Activated CD4-positive, alpha-beta T cell treated with anti-CD3 and anti-CD28 coated beads, Interleukin-2, amount 10 ng/mL, durations not matched to agents 7 days and 5 days (primary cell): ENCODE measurements at regions of chr10 and their contacts with region 1.

Region 1: GRCh38 chr10:70146489-70147258 is at the start of gene TYSND1:
- DNase-seq: peak; percentile 96
- H3K4me3 Mint-ChIP-seq: peak within 1 kb of the TSS; percentile 85
- H3K27ac Mint-ChIP-seq: peak within 1 kb of the TSS; percentile 95
- H3K4me1 Mint-ChIP-seq: peaks cover 34% of the 10 kb centered on the region
- H3K27me3 Mint-ChIP-seq: no peaks in the 10 kb centered on the region
- total RNA-seq, gene TYSND1: 11.6 to 14.3 TPM

Region 2: DNA sequence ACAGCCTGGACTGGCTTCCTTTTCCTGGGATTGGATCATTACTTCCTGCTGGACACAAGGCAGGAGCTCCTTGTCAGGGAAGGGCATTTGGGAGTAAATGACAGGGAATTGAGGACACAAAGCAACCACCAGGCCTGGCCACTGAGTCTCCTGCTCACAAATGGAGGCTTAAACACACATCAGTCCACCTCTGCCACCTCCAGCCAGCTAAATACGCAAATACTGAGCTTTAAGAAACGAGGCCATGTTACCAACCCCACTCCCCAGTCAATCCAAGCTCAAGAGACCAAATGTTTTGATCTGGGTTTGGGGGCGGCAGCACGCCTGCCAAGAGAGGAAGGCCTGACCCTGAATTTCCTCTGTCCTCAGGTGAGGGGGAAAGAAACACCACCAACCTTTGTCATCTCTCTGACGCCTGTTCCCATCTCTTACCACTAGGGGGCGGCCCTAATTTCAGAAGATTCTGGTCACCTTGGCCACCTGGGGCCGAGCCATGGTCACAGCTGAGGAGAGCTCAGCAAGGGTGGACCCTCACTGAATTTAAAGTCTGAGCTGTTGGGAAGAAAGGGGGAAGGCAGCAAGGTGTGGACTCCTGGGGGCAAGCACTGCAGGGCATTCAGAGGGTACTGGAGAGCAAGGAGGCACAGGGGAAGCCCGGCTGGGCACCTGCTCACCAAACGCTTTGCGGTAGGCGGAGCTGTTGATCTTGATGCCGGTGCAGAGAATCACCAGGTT is 30.6 kb before region 1 on chr10:
- CTCF ChIA-PET with region 1: interaction called, 21 read pairs
- POLR2A ChIA-PET with region 1: no interaction called
- DNase-seq: peak; percentile 64
- H3K4me3 Mint-ChIP-seq: no peak overlapping the region
- H3K27ac Mint-ChIP-seq: no peak overlapping the region
- H3K4me1 Mint-ChIP-seq: peaks cover 14% of the 10 kb centered on the region
- H3K27me3 Mint-ChIP-seq: no peaks in the 10 kb centered on the region

Region 3: DNA sequence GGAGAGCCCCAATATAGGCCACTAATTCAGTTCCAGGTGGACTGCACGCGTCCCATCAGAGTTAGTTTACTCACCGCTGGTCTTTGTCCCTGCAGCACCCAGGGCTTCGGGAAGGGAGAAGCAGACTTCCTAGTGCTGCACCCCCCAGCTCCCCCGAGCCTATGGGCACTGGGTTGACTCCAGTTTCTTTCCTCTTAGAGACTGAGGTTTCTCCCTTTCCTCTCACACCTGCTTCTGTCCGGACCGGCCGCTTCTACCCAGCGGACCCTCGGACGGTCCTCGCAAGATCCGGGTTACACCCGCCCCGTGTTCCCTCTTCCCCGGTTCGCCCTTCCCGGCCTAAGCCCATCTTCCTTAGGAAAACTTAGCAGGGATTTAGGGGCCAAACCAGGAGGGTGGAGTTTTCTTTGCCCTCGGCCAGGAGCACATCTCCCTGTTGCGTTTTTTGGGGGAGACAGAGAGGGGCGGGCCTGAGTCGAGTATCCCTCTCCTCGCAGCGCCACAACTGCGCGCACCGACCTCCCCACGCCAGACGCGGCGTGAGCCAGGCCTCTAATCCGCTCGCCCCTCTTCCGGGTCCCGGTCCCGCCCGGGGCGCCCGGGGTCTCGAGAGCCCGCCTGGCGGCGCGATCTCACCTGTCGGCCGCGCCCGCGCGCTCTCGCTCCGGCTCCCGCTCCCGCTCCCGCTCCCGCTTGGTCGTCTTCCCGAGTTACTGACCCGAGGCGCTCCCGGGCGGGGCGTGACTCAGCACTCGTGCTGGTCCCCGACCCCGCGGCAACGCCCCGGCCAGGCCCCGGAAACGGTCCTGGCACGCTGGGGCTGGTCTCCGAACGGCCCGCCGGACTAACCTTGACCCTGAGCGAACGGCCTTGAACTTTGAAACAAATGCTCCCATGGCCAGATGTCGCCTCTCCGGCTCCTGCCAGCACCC is 14.3 kb before region 1 on chr10 and contains the start of gene AIFM2:
- CTCF ChIA-PET with region 1: interaction called, 62 read pairs
- POLR2A ChIA-PET with region 1: no interaction called
- DNase-seq: peak; percentile 30
- H3K4me3 Mint-ChIP-seq: peak within 1 kb of the TSS; percentile 79
- H3K27ac Mint-ChIP-seq: peak within 1 kb of the TSS; percentile 86
- H3K4me1 Mint-ChIP-seq: peaks cover 20% of the 10 kb centered on the region
- H3K27me3 Mint-ChIP-seq: peaks cover 2% of the 10 kb centered on the region
- total RNA-seq, gene AIFM2: 2.5 to 3.3 TPM

Region 4: DNA sequence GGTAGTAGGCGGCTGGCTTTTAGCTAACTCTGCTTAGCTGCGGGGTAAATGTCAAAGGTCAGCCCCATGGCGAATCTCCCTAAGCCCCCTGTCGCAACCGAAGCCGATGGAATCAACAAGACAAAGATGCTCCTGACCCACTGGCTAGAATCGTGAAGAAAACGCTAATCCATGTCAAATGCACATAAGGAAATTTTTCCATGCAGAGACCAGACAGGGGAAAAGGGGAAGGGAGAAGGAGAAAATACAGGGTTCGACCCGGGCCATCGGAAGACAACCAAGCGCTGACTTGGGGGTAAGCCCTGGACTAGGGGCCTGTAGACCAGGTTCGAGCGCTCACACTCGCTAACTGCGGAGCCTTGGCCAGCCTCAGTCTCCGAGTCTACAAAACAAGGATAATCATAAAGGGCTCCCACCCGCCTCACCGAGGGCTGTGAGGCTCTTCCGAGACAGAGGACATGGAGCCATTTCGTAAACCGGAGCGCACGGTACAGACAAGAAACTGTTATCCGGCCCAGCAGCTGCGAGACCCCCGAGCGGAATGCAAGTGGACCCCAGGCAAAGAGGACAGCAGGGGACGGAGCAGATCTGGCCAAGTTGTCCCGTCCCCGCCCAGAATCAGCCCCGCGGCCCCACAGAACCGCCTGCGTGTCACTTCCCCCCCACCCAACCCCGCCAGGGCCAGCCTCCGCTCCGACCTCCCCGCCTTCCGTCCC is 23.1 kb after region 1 on chr10:
- CTCF ChIA-PET with region 1: interaction called, 27 read pairs
- POLR2A ChIA-PET with region 1: interaction called, 19 read pairs
- DNase-seq: no peak
- H3K4me3 Mint-ChIP-seq: peak overlapping the region; percentile 84
- H3K27ac Mint-ChIP-seq: peak overlapping the region; percentile 97
- H3K4me1 Mint-ChIP-seq: peaks cover 63% of the 10 kb centered on the region
- H3K27me3 Mint-ChIP-seq: no peaks in the 10 kb centered on the region

Region 5: DNA sequence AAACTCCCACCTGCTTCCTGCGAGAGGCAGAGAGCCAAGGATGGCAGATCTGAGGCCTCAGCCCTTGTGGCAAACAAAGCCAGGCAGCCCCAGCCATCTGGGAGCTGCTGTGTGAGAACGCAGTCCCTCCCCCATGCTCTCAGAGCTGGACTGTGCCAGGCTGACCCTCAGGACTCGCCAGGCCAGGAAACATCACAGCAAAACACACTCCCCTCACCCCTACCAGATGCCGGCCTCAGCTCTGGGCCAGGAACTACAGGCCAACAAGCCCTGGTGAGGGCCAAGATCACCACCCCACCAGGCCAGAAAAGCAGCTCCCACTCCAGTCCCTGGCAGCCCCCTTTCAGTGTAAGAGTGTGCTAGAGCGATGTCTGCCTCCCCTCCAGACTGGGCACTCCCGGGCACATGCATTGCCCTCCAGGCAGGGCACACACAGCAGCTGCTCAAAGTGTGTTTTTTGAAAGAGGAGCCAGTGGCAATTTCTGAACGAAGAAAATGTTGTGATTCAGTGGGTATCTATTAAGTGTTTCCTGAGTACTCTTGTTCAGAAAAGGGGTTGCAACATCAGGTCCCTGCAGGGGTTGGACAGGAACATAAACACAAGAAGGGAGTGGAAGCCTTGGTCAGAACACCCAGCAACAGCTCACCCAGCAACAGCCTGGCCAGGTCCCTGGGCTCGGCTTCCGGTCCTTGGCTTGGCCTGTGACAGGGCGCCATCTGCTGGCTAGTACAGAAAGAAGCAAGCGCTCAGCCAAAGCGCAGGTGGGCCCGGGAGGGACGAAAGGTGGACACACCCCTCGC is 217.5 kb after region 1 on chr10:
- CTCF ChIA-PET with region 1: interaction called, 11 read pairs
- POLR2A ChIA-PET with region 1: no interaction called
- DNase-seq: peak; percentile 89
- H3K4me3 Mint-ChIP-seq: no peak overlapping the region
- H3K27ac Mint-ChIP-seq: peak overlapping the region; percentile 57
- H3K4me1 Mint-ChIP-seq: peaks cover 12% of the 10 kb centered on the region
- H3K27me3 Mint-ChIP-seq: no peaks in the 10 kb centered on the region

Region 6: DNA sequence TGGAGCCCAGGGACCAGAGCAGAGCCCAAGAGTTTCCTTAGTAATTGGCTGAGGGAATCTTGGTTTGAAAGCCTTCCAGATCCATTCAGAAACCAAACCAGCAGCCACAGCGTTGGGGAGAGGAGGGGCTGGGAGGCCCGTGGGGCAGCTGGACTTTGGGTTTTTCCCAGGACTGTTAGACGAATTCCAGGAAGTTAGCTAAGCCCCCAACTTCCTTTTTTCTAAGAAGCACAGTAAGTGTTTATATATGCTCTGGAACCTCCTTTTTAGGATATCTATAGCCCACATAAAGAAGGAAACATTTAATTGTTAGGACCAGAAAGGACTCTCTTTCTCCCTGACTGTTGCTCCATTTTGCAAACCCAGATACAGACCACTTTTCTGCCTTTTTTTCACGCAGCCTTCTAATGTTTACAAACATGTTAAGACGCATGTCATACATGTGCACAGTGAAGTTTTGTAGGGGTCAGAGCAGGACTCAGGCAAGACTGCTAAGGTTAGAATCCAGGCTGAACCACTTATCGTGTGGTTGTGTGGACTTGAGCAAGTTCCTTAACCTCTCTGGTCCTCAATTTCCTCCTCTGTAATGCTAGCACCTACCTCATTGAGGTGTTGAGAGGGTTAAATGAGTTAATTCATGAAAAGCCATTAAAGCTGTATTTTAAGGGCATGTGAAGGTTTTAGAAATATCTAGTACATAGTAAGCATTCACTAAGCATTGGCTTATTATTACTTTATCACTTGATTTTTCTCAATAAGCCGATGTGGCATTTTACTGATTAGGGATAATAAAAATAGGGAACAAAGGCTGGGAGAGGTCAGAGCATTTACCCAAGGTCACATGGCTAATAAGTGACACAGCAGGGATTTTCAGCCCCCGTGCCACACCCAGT is 596.1 kb after region 1 on chr10:
- CTCF ChIA-PET with region 1: no interaction called
- POLR2A ChIA-PET with region 1: no interaction called
- DNase-seq: no peak
- H3K4me3 Mint-ChIP-seq: no peak overlapping the region
- H3K27ac Mint-ChIP-seq: peak overlapping the region; percentile 55
- H3K4me1 Mint-ChIP-seq: peaks cover 13% of the 10 kb centered on the region
- H3K27me3 Mint-ChIP-seq: no peaks in the 10 kb centered on the region